Activated CD4-positive, alpha-beta T cell treated with anti-CD3 and anti-CD28 coated beads for 36 hours (primary cell): ENCODE measurements at regions of chr17 and their contacts with region 1.

Region 1: GRCh38 chr17:59619293-59620063 is at the start of gene CLTC:
- DNase-seq: peak; percentile 97
- ATAC-seq: peak; percentile 85
- H3K4me3 Mint-ChIP-seq: peak within 1 kb of the TSS; percentile 89
- H3K27ac Mint-ChIP-seq: peak within 1 kb of the TSS; percentile 98
- H3K4me1 Mint-ChIP-seq: peaks cover 49% of the 10 kb centered on the region
- H3K27me3 Mint-ChIP-seq: no peaks in the 10 kb centered on the region
- total RNA-seq, gene CLTC: 180 to 186 TPM

Region 2: DNA sequence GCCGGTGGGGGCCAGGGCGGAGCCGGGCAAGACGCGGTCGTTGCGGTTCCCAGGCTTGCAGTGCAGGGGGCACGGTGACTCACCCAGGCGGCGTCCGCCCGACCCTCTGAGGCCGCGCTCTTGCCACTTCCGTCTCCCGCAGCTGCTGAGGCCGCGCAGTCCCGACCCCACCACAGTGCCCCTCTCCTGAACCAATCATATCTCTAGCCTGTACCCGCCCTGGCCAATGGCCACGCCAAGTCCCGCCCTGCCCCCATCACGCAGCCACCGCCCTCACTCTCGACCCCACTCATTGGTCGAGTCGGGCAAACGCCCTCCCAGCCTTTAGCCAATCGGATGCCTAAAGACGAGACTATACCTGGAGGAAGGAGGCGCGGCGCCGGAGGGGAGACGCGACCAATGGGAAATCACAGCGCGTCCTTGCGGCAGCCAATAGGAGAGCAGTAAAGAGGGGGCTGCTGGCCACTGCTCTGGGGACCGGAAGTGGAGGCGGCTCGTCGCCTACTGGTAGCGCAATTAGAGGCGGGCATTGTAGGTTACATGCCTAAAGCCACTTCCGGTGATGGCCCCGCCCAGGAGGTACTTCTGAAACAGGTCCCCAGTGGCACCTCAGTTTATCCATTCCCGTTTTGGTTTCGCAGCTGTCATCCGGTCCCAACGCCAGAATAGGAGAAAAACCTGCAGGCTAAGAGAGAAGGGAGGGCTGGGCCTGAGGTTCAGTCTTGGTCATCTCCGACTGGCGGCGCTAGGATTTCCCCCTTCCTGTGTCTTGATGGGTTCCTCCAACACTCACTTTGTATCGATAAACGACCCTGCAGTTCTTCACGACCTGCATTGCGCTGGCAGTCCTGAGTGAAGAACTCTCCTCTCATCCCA is 1101.5 kb before region 1 on chr17:
- CTCF ChIA-PET with region 1: no interaction called
- POLR2A ChIA-PET with region 1: no interaction called
- intact Hi-C with region 1: loop called in 1 of 2 experiments (anchors 1 kb)
- DNase-seq: peak; percentile 100
- ATAC-seq: peak; percentile 87
- H3K4me3 Mint-ChIP-seq: peak overlapping the region; percentile 96
- H3K27ac Mint-ChIP-seq: peak overlapping the region; percentile 95
- H3K4me1 Mint-ChIP-seq: peaks cover 32% of the 10 kb centered on the region
- H3K27me3 Mint-ChIP-seq: no peaks in the 10 kb centered on the region

Region 3: DNA sequence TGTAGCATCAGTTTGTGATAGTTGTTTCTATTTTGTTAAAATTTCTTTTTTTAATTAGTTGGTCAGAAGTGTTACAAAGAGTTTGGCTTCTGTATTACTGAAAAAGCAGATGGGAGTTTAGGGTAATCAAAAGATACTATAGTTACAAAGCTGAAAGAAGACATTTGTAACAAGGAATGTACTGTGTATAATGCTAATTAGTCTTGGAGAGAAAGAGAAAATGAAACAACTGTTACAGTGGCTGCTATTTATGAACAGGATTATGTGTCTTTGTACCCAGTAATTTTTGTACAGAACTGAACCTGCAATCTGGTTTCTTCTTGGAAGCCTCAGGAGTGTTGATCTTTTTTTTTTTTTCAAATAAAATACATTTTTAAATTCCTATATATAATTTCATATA is 384.8 kb before region 1 on chr17:
- CTCF ChIA-PET with region 1: no interaction called
- POLR2A ChIA-PET with region 1: no interaction called
- intact Hi-C with region 1: no loop called
- DNase-seq: no peak
- ATAC-seq: no peak
- H3K4me3 Mint-ChIP-seq: no peak overlapping the region
- H3K27ac Mint-ChIP-seq: no peak overlapping the region
- H3K4me1 Mint-ChIP-seq: no peaks in the 10 kb centered on the region
- H3K27me3 Mint-ChIP-seq: no peaks in the 10 kb centered on the region

Region 4: DNA sequence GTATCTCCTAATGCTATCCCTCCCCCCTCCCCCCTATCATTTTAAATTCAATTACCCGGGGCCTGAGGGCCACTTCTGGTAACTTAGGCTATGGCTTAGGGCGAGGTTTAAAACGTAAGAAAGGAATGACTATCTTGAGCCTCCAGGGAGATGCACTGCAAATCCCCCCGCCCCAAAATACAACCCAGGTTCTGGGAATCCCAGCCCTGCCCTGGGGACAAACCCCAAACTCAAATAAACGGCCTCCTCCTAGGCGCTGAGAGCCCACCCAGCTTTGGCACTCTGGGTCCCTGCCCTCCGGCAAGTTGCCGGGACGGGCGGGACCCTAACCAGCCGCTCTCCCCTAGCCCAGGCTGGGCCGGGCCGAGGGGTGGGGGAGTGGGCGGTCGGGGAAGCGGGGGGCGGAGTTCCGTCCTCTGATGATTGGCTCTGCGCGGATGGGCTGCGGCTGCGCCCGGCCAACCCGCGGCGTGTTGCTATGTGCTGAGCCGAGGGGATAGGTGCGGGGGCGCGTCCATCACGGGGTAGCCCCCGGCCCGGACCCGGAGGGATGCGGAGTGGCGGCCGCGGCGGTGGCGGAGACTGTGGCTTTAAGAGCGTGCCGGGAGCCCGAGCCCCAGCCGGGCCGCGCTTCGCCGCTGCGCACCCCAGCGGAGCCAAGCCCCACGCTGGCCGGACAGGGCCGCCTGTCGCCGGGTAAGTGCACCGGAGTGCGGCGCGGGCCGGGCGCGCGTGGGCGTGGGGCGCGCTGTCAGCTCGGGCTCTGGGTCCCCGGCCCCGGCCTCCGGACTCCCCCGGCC is 288.1 kb before region 1 on chr17 and contains the start of gene YPEL2:
- CTCF ChIA-PET with region 1: no interaction called
- POLR2A ChIA-PET with region 1: no interaction called
- intact Hi-C with region 1: loop called in 1 of 2 experiments (anchors 1 kb)
- DNase-seq: peak; percentile 93
- ATAC-seq: peak; percentile 95
- H3K4me3 Mint-ChIP-seq: peak within 1 kb of the TSS; percentile 81
- H3K27ac Mint-ChIP-seq: peak within 1 kb of the TSS; percentile 75
- H3K4me1 Mint-ChIP-seq: peaks cover 68% of the 10 kb centered on the region
- H3K27me3 Mint-ChIP-seq: no peaks in the 10 kb centered on the region
- total RNA-seq, gene YPEL2: 4.3 to 6.9 TPM

Region 5: GRCh38 chr17:59547131-59547915 is 72.2 kb before region 1 on chr17:
- CTCF ChIA-PET with region 1: no interaction called
- POLR2A ChIA-PET with region 1: no interaction called
- intact Hi-C with region 1: no loop called
- DNase-seq: no peak
- ATAC-seq: no peak
- H3K4me3 Mint-ChIP-seq: no peak overlapping the region
- H3K27ac Mint-ChIP-seq: no peak overlapping the region
- H3K4me1 Mint-ChIP-seq: no peaks in the 10 kb centered on the region
- H3K27me3 Mint-ChIP-seq: peaks cover 6% of the 10 kb centered on the region

Region 6: DNA sequence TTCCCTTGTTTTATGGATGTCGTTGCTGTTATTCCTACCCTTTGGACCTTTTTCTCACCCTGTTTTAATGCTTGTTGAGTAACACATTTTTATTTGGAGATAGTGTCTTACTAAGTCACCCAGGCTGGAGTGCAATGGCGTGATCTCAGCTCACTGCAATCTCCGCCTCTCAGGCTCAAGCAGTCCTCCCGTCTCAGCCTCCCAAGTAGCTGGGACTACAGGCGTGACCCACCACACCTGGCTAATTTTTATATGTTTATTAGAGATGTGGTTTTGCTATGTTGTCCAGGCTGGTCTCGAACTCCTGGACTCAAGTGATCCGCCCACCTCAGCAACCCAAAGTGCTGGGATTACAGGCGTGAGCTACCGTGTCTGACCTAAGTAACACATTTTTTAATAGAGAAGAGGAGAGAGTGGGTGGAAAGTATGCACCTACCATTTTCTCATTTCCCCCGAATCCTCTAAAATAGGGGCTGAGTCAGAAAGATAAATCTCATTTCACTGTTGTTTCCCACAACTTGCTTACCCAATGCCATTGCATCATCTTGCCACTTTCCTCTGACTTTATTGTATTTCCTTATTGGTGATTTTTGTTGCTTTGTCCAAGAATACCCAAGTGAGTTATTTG is 47.1 kb before region 1 on chr17:
- CTCF ChIA-PET with region 1: interaction called, 5 read pairs
- POLR2A ChIA-PET with region 1: interaction called, 7 read pairs
- intact Hi-C with region 1: loop called in 1 of 2 experiments (anchors 1 kb)
- DNase-seq: peak; percentile 54
- ATAC-seq: peak; percentile 93
- H3K4me3 Mint-ChIP-seq: peak overlapping the region; percentile 31
- H3K27ac Mint-ChIP-seq: peak overlapping the region; percentile 91
- H3K4me1 Mint-ChIP-seq: peaks cover 17% of the 10 kb centered on the region
- H3K27me3 Mint-ChIP-seq: no peaks in the 10 kb centered on the region

Region 7: GRCh38 chr17:59707114-59707970 is 87.9 kb after region 1 on chr17 and contains the starts of genes PTRH2 and VMP1:
- CTCF ChIA-PET with region 1: interaction called, 5 read pairs
- POLR2A ChIA-PET with region 1: interaction called, 4 read pairs
- intact Hi-C with region 1: loop called (anchors 1 to 5 kb)
- DNase-seq: peak; percentile 97
- ATAC-seq: peak; percentile 99
- H3K4me3 Mint-ChIP-seq: peak within 1 kb of the TSS; percentile 92
- H3K27ac Mint-ChIP-seq: peak within 1 kb of the TSS; percentile 96
- H3K4me1 Mint-ChIP-seq: peaks cover 60% of the 10 kb centered on the region
- H3K27me3 Mint-ChIP-seq: no peaks in the 10 kb centered on the region
- total RNA-seq, gene PTRH2: 41.7 to 54.7 TPM
- total RNA-seq, gene VMP1: 378 to 402 TPM

Region 8: DNA sequence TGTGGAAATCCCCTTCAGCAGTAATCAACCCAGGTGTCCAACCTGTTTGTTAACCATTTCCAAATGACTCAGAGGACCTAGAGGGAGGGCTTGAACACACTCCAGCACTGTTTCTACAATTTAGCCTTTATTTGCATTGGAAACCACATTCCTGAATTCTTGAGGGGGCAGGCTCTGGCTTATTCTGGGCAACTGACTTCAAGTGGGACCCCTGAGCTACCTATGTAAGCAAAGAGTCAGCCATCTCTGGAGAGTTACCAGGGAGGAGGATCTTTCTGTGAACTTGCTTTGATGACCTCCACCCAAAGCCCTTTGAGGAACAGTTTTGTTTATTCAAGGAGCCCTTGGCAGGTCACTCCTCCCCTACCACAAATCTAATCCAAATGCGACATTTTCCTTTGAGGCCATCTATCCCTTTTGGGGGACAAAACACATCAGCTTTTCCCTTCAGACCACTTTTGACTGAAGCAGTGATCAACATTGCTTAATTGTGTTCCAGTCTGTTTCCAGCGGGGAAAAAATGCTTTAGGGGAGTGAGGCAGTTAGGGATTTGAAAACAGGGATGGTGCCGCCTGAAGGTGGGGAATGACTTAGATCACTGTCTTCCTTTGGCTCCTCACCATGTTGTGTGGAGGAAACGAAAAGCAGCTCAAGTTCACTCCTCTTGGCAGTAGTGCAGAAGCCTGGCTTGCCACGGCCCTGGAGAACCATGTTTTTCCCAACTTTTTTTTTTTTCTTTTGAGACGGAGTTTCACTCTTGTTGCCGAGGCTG is 227.1 kb after region 1 on chr17:
- CTCF ChIA-PET with region 1: no interaction called
- POLR2A ChIA-PET with region 1: interaction called, 3 read pairs
- intact Hi-C with region 1: loop called in 1 of 2 experiments (anchors 1 kb)
- DNase-seq: no peak
- ATAC-seq: peak; percentile 21
- H3K4me3 Mint-ChIP-seq: peak overlapping the region; percentile 46
- H3K27ac Mint-ChIP-seq: peak overlapping the region; percentile 87
- H3K4me1 Mint-ChIP-seq: peaks cover 73% of the 10 kb centered on the region
- H3K27me3 Mint-ChIP-seq: no peaks in the 10 kb centered on the region

Region 9: GRCh38 chr17:60392042-60392844 is 772.8 kb after region 1 on chr17 and contains the start of gene USP32:
- CTCF ChIA-PET with region 1: no interaction called
- POLR2A ChIA-PET with region 1: no interaction called
- intact Hi-C with region 1: loop called in 1 of 2 experiments (anchors 1 kb)
- DNase-seq: peak; percentile 99
- ATAC-seq: peak; percentile 93
- H3K4me3 Mint-ChIP-seq: peak within 1 kb of the TSS; percentile 77
- H3K27ac Mint-ChIP-seq: peak within 1 kb of the TSS; percentile 99
- H3K4me1 Mint-ChIP-seq: peaks cover 41% of the 10 kb centered on the region
- H3K27me3 Mint-ChIP-seq: no peaks in the 10 kb centered on the region
- total RNA-seq, gene USP32: 32.3 to 33.1 TPM